AG04449 (cell line): ENCODE measurements at regions of chr18 and their contacts with region 1.

Region 1: DNA sequence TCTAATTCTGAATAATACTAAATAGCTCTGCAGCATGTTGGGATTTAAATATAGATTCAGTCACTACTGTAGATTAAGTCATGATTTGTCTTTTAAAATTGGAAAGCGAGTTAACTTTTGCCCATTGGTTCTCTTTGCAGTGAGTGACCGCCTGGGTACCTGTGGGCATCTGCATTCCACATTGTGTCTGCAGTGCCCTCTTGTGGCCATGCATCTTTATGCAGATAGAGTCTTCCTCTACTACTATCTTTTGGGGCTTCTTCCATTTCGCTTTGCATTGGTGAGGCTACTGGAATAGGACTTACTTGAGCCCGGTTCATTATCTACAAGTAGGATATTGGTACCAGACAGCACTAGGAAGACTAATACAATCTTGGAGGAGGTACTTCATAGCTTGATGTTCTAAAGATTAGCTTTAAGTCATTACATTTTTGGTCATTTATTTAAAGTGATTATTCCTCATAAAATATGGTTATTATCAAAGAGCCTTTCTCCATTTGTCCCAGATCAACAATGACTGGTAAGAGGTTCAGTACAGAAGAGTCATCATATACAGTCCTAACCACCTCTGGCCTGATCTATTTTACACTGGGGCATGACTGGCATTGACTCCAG is 203.0 kb downstream of the SOCS6 start:
- DNase-seq: no peak
- H3K4me3 ChIP-seq: no peak overlapping the region
- CTCF ChIP-seq: peak; percentile 75

Region 2: DNA sequence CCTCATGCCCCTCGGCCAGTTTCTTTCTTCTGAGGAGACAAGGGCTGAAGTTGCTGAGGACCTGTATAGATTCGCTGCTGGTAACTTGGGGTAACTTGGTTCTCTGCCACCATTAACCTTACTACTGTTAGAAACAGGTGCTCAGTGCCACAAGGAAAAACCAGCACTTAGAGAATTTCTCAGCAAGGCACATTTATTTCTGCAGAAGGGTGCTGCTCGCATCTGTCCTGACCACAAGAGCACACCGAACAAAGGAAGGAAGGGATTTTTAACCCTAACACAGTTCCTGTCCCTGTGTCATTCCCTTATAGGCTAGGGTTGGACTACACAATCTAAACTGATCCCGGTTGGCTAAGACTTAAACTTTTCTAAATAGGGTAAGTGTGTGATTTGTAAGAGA is 48.9 kb before region 1 on chr18:
- CTCF ChIA-PET with region 1: no interaction called
- POLR2A ChIA-PET with region 1: no interaction called
- DNase-seq: no peak
- H3K4me3 ChIP-seq: no peak overlapping the region
- CTCF ChIP-seq: no peak

Region 3: GRCh38 chr18:70469916-70470315 is 21.9 kb before region 1 on chr18:
- CTCF ChIA-PET with region 1: interaction called, 20 read pairs
- POLR2A ChIA-PET with region 1: no interaction called
- DNase-seq: no peak
- H3K4me3 ChIP-seq: no peak overlapping the region
- CTCF ChIP-seq: no peak

Region 4: DNA sequence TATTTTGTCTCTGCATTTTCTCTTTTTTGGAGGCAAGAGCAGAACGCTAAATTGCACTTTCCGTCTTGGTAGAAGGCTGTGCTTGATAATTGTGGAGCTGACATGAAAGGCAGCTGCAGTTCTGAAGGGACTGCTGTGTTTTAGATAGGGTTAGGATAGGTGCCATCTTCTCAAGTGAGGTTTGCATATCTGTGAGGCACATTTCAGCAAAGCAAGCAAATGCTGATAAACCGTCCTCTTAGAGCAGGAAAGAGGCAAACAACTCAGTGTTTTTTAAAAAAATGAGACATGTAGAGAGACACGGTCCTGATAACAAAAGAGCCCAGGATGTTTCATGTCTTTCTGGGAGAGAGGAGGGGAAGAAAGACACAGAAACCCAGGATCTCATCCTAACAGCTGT is 14.7 kb after region 1 on chr18:
- CTCF ChIA-PET with region 1: interaction called, 53 read pairs
- POLR2A ChIA-PET with region 1: no interaction called
- DNase-seq: no peak
- H3K4me3 ChIP-seq: no peak overlapping the region
- CTCF ChIP-seq: no peak